ENCODE measurements at regions of chr14 and their contacts with region 1.

Region 1: DNA sequence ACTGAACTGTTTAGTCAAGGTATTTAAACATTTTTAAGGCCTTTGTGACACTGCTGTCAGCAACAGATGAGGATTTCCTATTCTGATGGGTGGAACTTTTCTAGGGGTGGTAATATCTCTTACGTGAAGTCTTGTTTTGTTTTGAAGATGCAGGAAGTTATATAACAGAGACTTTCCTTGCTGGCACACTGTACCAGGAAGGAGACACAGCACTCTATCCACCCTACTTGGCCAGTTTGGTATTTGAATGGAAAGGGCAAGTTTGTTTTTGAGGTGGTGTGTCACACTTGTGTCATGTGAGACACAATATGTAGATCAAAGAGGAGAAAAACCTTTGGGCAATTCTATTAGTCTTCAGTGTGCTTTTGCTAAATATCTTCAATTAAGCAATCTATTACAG is 51.6 kb upstream of the SRP54 start:
- DNase-seq: peak; percentile 56
- H3K4me3 Mint-ChIP-seq: peak overlapping the region; percentile 64
- H3K27ac Mint-ChIP-seq: peak overlapping the region; percentile 93
- H3K4me1 Mint-ChIP-seq: peaks cover 49% of the 10 kb centered on the region
- H3K27me3 Mint-ChIP-seq: no peaks in the 10 kb centered on the region

Region 2: GRCh38 chr14:34843011-34843554 is 88.1 kb before region 1 on chr14:
- CTCF ChIA-PET with region 1: no interaction called
- intact Hi-C with region 1: loop called (anchors 1 kb)
- DNase-seq: peak; percentile 59
- H3K4me3 Mint-ChIP-seq: no peak overlapping the region
- H3K27ac Mint-ChIP-seq: peak overlapping the region; percentile 89
- H3K4me1 Mint-ChIP-seq: peaks cover 30% of the 10 kb centered on the region
- H3K27me3 Mint-ChIP-seq: no peaks in the 10 kb centered on the region

Region 3: GRCh38 chr14:34865889-34866574 is 65.2 kb before region 1 on chr14:
- CTCF ChIA-PET with region 1: no interaction called
- intact Hi-C with region 1: no loop called
- DNase-seq: no peak
- H3K4me3 Mint-ChIP-seq: no peak overlapping the region
- H3K27ac Mint-ChIP-seq: no peak overlapping the region
- H3K4me1 Mint-ChIP-seq: peaks cover 38% of the 10 kb centered on the region
- H3K27me3 Mint-ChIP-seq: no peaks in the 10 kb centered on the region

Region 4: GRCh38 chr14:34966413-34966812 is 35.2 kb after region 1 on chr14:
- CTCF ChIA-PET with region 1: no interaction called
- intact Hi-C with region 1: loop called (anchors 1 kb)
- DNase-seq: peak; percentile 43
- H3K4me3 Mint-ChIP-seq: no peak overlapping the region
- H3K27ac Mint-ChIP-seq: peak overlapping the region; percentile 57
- H3K4me1 Mint-ChIP-seq: peaks cover 23% of the 10 kb centered on the region
- H3K27me3 Mint-ChIP-seq: no peaks in the 10 kb centered on the region

Region 5: DNA sequence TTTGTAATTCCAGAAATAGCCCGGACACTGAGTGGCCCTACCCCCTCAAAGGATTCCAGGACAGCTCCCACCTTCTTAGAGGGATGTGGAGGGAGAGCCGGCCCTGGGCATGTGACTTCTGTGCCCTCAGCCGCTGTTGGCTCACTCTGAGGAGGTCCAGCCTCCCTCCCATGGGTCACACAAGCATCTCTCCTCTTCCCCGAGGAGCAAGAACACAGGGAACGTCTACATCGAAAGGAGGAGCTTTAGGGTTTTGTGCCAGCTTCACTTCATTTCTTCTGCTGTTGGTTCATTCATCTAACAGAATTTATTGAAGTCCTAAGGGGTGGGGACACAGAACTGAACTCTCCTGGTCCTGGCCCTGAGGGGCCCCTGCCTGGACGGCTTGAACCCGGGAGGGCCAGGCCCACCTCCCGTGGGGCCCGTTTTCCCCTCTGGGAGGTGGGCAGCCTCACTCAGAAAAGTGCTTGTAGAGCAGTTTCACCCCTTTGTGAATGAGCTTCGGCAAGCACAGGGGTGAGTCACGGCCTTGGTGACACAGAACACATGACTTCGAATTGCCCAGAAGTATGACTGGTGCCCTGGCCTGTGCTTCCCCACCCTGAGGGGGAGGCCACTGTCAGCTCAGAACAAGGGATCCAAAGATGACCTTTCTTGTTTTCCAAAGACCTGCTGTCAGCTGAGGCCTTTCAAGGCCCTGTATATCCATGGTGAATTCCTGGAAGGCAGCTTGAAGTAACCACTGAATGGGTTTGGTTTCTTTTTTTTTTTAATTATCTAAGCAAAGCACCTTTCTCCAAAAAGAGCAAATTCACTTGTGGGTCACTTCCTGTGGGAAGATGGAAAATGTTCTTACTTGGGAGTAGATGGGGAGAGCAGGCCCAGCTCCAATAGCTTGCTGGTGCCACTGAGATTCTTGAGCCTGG is 434.2 kb after region 1 on chr14:
- CTCF ChIA-PET with region 1: no interaction called
- intact Hi-C with region 1: loop called (anchors 5 kb)
- DNase-seq: peak; percentile 94
- H3K4me3 Mint-ChIP-seq: no peak overlapping the region
- H3K27ac Mint-ChIP-seq: peak overlapping the region; percentile 92
- H3K4me1 Mint-ChIP-seq: peaks cover 60% of the 10 kb centered on the region
- H3K27me3 Mint-ChIP-seq: no peaks in the 10 kb centered on the region

Measured in activated naive CD4-positive, alpha-beta T cell treated with anti-CD3 and anti-CD28 coated beads for 36 hours (primary cell).